SK-N-SH (cell line): ENCODE measurements at regions of chr3 and their contacts with region 1.

Region 1: GRCh38 chr3:159260049-159260662 is 458.3 kb downstream of the MFSD1 start:
- DNase-seq: peak; percentile 30
- H3K4me3 ChIP-seq: no peak overlapping the region; a peak in 1 of 4 replicates
- H3K27ac ChIP-seq: no peak overlapping the region
- H3K4me1 ChIP-seq: peaks cover 0 to 2% of the 10 kb centered on the region in 2 experiments; a peak in 1 of 4 replicates
- H3K27me3 ChIP-seq: no peaks in the 10 kb centered on the region
- CTCF ChIP-seq: peak; percentile 83
- EP300 ChIP-seq: no peak
- RAD21 ChIP-seq: peak; percentile 94

Region 2: GRCh38 chr3:158845765-158846350 is 414.3 kb before region 1 on chr3:
- CTCF ChIA-PET with region 1: interaction called, 322 read pairs
- POLR2A ChIA-PET with region 1: no interaction called
- DNase-seq: peak; percentile 68
- H3K4me3 ChIP-seq: no peak overlapping the region
- H3K27ac ChIP-seq: no peak overlapping the region
- H3K4me1 ChIP-seq: peaks cover 3 to 9% of the 10 kb centered on the region in 2 experiments; a peak in 2 of 4 replicates
- H3K27me3 ChIP-seq: no peaks in the 10 kb centered on the region
- CTCF ChIP-seq: peak; percentile 84
- EP300 ChIP-seq: no peak
- RAD21 ChIP-seq: peak; percentile 90

Region 3: DNA sequence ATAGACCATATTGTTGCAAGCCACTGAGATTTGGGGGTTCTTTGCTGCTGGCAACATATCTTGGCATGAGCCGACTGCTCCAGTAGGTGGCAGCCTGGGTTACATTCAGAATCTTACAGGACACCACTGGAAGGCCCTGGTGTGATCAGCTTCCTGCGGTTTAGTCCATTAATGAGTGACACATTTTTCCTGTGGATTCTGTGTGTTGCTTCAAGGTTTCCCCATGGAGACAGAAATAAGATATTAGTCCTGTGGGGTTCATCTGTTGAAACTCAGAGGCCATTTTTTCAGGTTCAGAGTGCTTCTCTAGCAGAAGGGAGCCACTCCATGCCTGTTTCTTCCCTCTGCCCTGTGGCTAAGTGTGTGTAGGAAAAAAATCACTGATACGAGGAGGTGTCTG is 342.1 kb before region 1 on chr3:
- CTCF ChIA-PET with region 1: interaction called, 108 read pairs
- POLR2A ChIA-PET with region 1: no interaction called
- DNase-seq: peak; percentile 58
- H3K4me3 ChIP-seq: no peak overlapping the region
- H3K27ac ChIP-seq: no peak overlapping the region; a peak in 1 of 4 replicates
- H3K4me1 ChIP-seq: peaks cover 0 to 10% of the 10 kb centered on the region in 2 experiments; a peak in 2 of 4 replicates
- H3K27me3 ChIP-seq: no peaks in the 10 kb centered on the region
- CTCF ChIP-seq: peak; percentile 83
- EP300 ChIP-seq: 0 out of 4 replicates have a peak, but pooled peaks of 1 of the 2 experiments have one; percentile 17
- RAD21 ChIP-seq: peak; percentile 83

Region 4: DNA sequence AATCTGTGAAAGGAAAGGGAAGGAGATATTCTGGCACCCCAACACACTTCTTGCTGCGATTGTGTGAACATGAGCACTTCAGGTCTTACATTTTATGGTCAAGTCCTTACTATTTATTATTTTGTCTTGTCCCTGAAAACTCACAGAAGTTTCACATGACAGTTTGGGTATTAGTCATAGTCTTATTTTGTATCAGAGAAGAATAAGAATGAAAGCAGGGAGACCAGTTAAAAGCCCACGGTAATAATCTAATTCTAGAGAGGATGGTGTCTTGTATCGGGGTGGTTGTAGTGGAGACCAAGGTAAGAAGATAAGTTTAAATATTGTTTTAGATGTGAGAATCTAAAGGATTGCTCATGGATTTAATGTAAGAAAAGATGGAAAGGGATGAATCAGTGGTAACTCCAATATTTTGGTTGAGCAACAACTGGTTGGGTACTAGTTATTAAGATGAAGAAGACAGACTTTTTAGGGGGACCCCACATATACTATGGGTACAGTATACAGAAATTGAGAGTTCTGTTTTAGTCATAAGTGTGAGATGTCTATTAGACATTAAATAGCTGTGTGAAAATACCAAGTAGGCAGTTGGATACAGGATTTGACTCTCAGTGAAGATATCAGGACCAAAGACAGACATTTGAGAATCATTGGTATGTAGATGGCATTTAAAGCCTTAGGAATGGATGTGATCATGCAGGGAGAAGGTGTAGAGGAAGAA is 230.7 kb before region 1 on chr3:
- CTCF ChIA-PET with region 1: no interaction called
- POLR2A ChIA-PET with region 1: no interaction called
- DNase-seq: no peak
- H3K4me3 ChIP-seq: no peak overlapping the region
- H3K27ac ChIP-seq: no peak overlapping the region
- H3K4me1 ChIP-seq: no peaks in the 10 kb centered on the region; a peak in 1 of 4 replicates
- H3K27me3 ChIP-seq: no peaks in the 10 kb centered on the region
- CTCF ChIP-seq: no peak
- EP300 ChIP-seq: no peak
- RAD21 ChIP-seq: no peak

Region 5: DNA sequence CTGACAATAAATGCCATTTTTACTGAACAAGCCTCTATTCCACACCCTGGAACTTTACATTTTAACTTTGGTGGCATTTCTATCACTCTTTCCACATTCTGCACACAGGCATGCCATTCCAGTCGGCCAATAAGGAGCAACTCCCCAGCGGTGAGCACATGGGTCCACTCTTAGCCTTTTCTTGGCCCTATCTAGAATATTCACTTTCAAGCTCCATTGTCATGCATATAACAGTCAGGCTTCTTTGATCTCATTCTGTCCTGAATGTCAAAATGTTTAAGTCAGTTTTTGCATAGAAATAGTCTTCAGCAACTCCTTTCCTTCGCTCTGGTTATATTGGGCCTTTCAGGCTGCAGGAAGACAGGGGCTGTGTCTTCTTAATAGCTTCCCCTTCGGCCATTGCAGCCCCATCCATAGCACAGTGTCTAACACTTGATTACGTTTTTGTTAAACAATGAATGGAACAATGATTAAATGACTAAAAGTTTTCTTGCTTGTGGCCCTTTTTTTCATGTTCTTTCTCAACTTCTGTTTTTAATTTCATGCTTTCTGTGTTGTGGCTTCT is 31.0 kb before region 1 on chr3:
- CTCF ChIA-PET with region 1: no interaction called
- POLR2A ChIA-PET with region 1: no interaction called
- DNase-seq: no peak
- H3K4me3 ChIP-seq: no peak overlapping the region
- H3K27ac ChIP-seq: no peak overlapping the region
- H3K4me1 ChIP-seq: peaks cover 0 to 5% of the 10 kb centered on the region in 2 experiments; a peak in 1 of 4 replicates
- H3K27me3 ChIP-seq: no peaks in the 10 kb centered on the region
- CTCF ChIP-seq: no peak
- EP300 ChIP-seq: no peak
- RAD21 ChIP-seq: no peak

Region 6: DNA sequence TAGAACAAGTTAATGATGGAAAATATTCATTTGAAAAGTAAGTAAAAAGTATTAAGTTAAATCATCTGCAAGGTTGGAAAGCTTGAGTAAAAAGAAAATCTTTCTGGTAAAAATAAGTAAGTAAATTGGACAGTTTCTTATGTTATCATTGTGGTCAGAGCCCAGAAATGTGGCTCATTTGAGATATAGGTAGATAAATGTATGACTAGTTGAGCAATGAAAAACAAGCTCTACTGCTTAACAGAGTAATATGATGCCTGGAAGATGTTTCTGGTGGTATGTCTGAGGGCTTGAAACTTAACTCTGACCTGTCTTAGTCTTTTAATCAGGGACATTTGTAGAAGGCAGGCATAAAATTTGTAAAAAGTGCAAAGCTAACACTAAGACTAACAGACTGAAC is 14.3 kb before region 1 on chr3:
- CTCF ChIA-PET with region 1: interaction called, 19 read pairs
- POLR2A ChIA-PET with region 1: no interaction called
- DNase-seq: no peak
- H3K4me3 ChIP-seq: no peak overlapping the region
- H3K27ac ChIP-seq: peak overlapping the region in 1 of 2 experiments; percentile 36; a peak in 2 of 4 replicates
- H3K4me1 ChIP-seq: peaks cover 0 to 5% of the 10 kb centered on the region in 2 experiments; a peak in 1 of 4 replicates
- H3K27me3 ChIP-seq: no peaks in the 10 kb centered on the region
- CTCF ChIP-seq: no peak
- EP300 ChIP-seq: peak in 1 of 2 experiments; percentile 57; a peak in 1 of 4 replicates
- RAD21 ChIP-seq: no peak

Region 7: GRCh38 chr3:159319156-159319555 is 59.0 kb after region 1 on chr3:
- CTCF ChIA-PET with region 1: no interaction called
- POLR2A ChIA-PET with region 1: no interaction called
- DNase-seq: no peak
- H3K4me3 ChIP-seq: no peak overlapping the region
- H3K27ac ChIP-seq: no peak overlapping the region
- H3K4me1 ChIP-seq: no peaks in the 10 kb centered on the region; a peak in 1 of 4 replicates
- H3K27me3 ChIP-seq: 0 out of 2 replicates have a peak, but pooled peaks cover 6% of the 10 kb centered on the region
- CTCF ChIP-seq: no peak
- EP300 ChIP-seq: no peak
- RAD21 ChIP-seq: no peak

Region 8: GRCh38 chr3:159340877-159341500 is 80.8 kb after region 1 on chr3:
- CTCF ChIA-PET with region 1: no interaction called
- POLR2A ChIA-PET with region 1: no interaction called
- DNase-seq: no peak
- H3K4me3 ChIP-seq: no peak overlapping the region
- H3K27ac ChIP-seq: no peak overlapping the region
- H3K4me1 ChIP-seq: no peaks in the 10 kb centered on the region
- H3K27me3 ChIP-seq: no peaks in the 10 kb centered on the region
- CTCF ChIP-seq: no peak
- EP300 ChIP-seq: no peak
- RAD21 ChIP-seq: no peak

Region 9: GRCh38 chr3:159586571-159587202 is 326.5 kb after region 1 on chr3:
- CTCF ChIA-PET with region 1: interaction called, 44 read pairs
- POLR2A ChIA-PET with region 1: no interaction called
- DNase-seq: peak; percentile 49
- H3K4me3 ChIP-seq: no peak overlapping the region; a peak in 1 of 4 replicates
- H3K27ac ChIP-seq: no peak overlapping the region
- H3K4me1 ChIP-seq: peaks cover 0 to 5% of the 10 kb centered on the region in 2 experiments; a peak in 1 of 4 replicates
- H3K27me3 ChIP-seq: no peaks in the 10 kb centered on the region
- CTCF ChIP-seq: peak; percentile 71
- EP300 ChIP-seq: no peak; a peak in 1 of 4 replicates
- RAD21 ChIP-seq: peak; percentile 78

Region 10: DNA sequence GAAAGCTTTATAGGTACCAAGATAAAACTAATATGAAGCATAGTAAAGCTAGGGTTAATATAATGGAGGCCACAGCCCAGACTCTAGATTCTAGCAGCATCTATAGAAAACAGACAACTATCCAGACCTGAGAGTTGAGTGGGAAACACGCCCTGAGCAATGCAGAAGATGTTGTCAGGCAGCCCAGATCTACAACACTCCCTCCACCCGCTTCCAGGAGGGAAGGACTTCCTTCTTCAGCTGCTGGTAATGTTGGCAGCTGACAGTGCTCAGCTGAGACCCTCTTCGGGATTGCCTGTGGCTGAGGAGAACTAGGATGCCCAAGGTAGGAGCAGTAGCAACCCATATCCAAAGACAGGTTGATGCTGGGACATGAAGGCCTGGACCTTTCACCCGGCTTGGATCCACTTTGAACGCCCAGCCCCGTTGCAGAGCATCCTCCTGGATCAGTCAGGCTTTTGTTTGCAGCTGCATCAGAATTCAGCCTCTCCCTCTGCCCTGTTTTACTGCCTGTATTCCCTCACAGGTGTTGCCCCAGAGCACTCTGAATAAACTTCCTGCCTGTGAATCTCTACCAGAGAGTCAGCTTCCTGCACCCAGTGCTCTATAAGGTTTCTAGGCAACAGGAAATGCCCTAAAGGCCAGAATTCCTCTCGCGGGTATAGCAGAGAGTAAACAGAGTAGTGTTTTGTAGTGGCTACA is 553.8 kb after region 1 on chr3:
- CTCF ChIA-PET with region 1: interaction called, 135 read pairs
- POLR2A ChIA-PET with region 1: no interaction called
- DNase-seq: no peak
- H3K4me3 ChIP-seq: no peak overlapping the region
- H3K27ac ChIP-seq: no peak overlapping the region
- H3K4me1 ChIP-seq: peaks cover 0 to 15% of the 10 kb centered on the region in 2 experiments; a peak in 1 of 4 replicates
- H3K27me3 ChIP-seq: no peaks in the 10 kb centered on the region
- CTCF ChIP-seq: no peak
- EP300 ChIP-seq: no peak
- RAD21 ChIP-seq: no peak